CD8-positive, alpha-beta memory T cell (primary cell): ENCODE measurements at regions of chr16 and their contacts with region 1.

Region 1: GRCh38 chr16:56866943-56867830 is 2.2 kb downstream of the SLC12A3 start:
- DNase-seq: peak in 3 of 5 donors; percentile 26 to 55 (median 43)
- H3K4me3 ChIP-seq: no peak overlapping the region
- H3K4me3 Mint-ChIP-seq: no peak overlapping the region
- H3K27ac ChIP-seq: no peak overlapping the region
- H3K27ac Mint-ChIP-seq: peak overlapping the region in 2 of 8 donors; percentile 1 to 13
- H3K4me1 ChIP-seq: peaks cover 14% of the 10 kb centered on the region
- H3K4me1 Mint-ChIP-seq: peaks cover 20 to 28% (median 21%) of the 10 kb centered on the region in 3 donors
- H3K27me3 ChIP-seq: no peaks in the 10 kb centered on the region
- H3K27me3 Mint-ChIP-seq: no peaks in the 10 kb centered on the region

Region 2: GRCh38 chr16:56793492-56793891 is 73.7 kb before region 1 on chr16:
- CTCF ChIA-PET with region 1: interaction called, 14 read pairs
- POLR2A ChIA-PET with region 1: no interaction called
- DNase-seq: no peak
- H3K4me3 ChIP-seq: no peak overlapping the region
- H3K4me3 Mint-ChIP-seq: no peak overlapping the region
- H3K27ac ChIP-seq: no peak overlapping the region
- H3K27ac Mint-ChIP-seq: peak overlapping the region in 2 of 8 donors; percentile 27 to 42
- H3K4me1 ChIP-seq: no peaks in the 10 kb centered on the region
- H3K4me1 Mint-ChIP-seq: peaks cover 0 to 4% (median 2%) of the 10 kb centered on the region in 3 donors
- H3K27me3 ChIP-seq: no peaks in the 10 kb centered on the region
- H3K27me3 Mint-ChIP-seq: no peaks in the 10 kb centered on the region

Region 3: DNA sequence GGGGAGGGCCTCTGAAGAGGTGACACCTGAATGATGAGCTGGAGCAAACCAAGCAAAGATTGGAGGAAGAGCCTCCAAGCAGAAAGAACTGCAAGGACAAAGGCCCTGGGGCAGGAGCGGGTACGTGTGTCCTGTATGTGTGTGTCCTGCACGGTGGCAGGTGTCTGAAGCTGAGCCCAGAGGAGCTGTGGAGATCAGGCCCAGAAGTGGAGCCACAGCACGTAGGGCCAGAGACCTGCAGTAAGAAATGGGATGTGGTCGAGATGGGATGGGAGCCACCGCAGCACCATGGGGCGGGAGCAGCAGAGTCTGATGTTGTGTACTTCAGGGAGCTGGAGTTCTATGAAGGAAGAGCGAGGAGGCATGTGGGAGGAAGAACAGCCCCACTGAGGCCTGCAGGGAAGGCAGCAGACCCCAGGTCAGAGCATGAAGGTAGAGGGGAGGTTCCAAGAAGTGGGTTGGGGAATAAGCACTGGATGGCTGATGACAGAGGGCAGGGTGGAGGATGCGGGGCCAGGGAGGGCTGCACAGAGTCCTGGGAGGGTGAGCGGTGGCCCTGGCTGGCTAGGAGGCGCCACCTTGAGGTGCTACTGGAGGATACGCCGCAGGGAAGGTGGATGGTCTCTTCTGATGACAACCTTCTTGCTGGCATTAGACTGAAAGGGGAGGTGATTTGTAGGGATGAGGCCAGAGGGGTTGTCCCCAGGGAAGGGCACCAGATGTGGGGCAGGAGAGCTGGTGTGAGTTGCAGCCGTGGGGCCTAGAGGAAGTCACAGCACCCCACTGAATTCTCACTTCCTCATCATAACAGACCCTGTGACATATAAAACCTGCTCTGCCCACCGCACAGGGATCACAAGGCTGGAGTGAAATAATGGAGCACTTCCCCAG is 83.9 kb after region 1 on chr16:
- CTCF ChIA-PET with region 1: interaction called, 27 read pairs
- POLR2A ChIA-PET with region 1: no interaction called
- DNase-seq: peak; percentile 17 to 65 (median 37)
- H3K4me3 ChIP-seq: no peak overlapping the region
- H3K4me3 Mint-ChIP-seq: peak overlapping the region in 1 of 7 donors; percentile 17
- H3K27ac ChIP-seq: no peak overlapping the region
- H3K27ac Mint-ChIP-seq: peak overlapping the region in 5 of 8 donors; percentile 5 to 71 (median 18)
- H3K4me1 ChIP-seq: no peaks in the 10 kb centered on the region
- H3K4me1 Mint-ChIP-seq: peaks cover 12 to 17% (median 12%) of the 10 kb centered on the region in 3 donors
- H3K27me3 ChIP-seq: no peaks in the 10 kb centered on the region
- H3K27me3 Mint-ChIP-seq: peaks cover 0 to 2% of the 10 kb centered on the region in 2 donors